ENCODE measurements at regions of chr13 and their contacts with region 1.

Region 1: DNA sequence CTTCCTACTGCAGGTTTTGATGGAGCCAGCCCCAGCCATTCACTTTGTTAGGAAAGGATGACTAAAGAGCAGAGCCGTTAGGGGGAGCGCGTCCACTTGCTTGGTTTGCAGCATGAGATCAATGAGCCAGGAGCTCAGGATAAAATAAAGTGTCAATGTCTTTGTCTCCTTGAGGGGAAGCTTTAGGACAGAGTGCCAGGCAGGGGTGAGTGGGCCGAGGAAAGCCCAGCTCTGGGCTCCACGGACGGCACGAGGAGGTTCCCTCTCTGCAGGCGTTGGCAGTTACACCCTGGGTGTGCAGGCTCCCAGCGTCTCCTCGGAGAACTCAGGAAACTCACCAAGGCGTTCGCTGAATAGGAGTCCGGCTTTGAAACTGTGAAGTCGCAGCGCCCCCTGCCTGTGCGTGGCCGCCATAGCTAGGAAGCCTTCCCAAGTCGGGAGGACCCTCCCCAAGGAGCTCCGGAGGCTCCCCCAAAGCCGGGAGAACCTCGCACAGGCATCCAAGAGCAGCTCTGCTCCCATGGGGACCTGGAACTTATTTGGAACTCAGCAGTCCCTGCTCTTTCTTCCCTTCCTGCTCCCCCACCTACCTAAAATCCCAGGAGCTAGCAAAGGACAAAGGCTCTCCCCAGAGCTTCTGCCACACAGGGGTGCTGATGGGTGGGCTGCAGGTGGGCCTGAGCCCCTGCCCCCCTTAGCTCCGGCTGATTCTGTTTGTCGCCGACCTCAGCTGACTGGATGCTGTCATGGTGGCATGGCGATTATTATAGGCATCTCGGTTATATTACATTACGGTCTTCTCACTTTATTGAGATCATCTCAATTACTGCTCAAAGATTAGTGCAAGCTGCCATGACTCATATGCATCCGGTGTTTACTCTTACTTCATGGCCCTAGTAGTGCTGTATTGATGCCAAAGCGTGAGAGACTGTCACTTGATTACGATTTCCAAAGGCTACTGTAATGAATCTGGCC is 34.4 kb downstream of the GSX1 start:
- DNase-seq: peak; percentile 82
- ATAC-seq: peak; percentile 84
- H3K4me3 Mint-ChIP-seq: no peak overlapping the region
- H3K27ac Mint-ChIP-seq: no peak overlapping the region
- H3K4me1 Mint-ChIP-seq: peaks cover 7% of the 10 kb centered on the region
- H3K27me3 Mint-ChIP-seq: peaks cover 51% of the 10 kb centered on the region

Region 2: GRCh38 chr13:27362064-27362883 is 464.4 kb before region 1 on chr13:
- CTCF ChIA-PET with region 1: interaction called, 45 read pairs
- POLR2A ChIA-PET with region 1: no interaction called
- intact Hi-C with region 1: loop called (anchors 1 kb)
- DNase-seq: peak; percentile 89
- ATAC-seq: peak; percentile 97
- H3K4me3 Mint-ChIP-seq: peak overlapping the region; percentile 26
- H3K27ac Mint-ChIP-seq: no peak overlapping the region
- H3K4me1 Mint-ChIP-seq: peaks cover 2% of the 10 kb centered on the region
- H3K27me3 Mint-ChIP-seq: peaks cover 8% of the 10 kb centered on the region

Region 3: DNA sequence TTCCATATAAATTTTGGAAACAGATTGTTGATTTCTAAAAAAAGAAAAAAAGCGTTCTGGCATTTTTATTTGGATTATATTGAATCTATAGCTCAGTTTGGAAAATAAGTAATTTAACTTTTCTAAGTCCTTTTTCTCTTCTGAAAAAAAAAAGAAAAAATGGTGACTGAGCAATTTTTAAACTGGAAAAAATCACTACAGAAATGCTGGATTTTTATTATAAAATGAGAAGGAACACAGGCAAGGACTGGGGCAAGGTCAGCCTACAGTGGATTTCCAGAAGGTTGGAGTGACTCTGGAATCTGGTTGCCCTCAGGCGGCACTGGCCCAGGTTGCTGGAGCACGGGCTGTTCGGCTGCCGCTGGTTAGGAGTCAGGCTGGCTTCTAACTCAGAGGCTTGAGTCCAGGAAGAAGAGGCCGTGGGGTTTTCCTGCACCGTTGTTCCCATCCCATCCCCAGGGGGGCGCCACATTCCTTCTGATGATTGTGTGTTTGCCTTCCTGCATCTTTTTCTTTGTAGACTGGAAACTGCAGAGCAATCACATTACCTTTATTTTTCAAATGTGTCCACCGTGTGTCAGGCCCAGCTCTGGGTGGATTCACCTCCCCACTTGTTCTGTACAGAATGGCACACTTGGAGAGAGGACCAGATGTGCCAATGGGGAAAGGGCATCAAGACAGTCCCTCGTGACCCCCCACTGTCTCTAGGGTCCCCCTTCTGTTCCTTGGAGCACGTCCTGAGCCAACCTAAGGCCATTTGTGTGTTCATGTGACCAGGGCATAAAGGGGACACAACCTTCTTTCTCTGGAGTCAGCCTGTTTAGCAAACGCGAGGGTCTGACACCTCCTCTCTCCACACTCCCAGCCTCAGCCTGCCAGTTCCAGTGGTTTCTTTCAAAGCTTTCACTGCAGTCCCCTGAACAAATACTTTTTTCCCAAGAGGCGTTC is 446.7 kb before region 1 on chr13:
- CTCF ChIA-PET with region 1: interaction called, 74 read pairs
- POLR2A ChIA-PET with region 1: no interaction called
- intact Hi-C with region 1: loop called (anchors 1 kb)
- DNase-seq: peak; percentile 81
- ATAC-seq: peak; percentile 72
- H3K4me3 Mint-ChIP-seq: no peak overlapping the region
- H3K27ac Mint-ChIP-seq: no peak overlapping the region
- H3K4me1 Mint-ChIP-seq: no peaks in the 10 kb centered on the region
- H3K27me3 Mint-ChIP-seq: peaks cover 6% of the 10 kb centered on the region

Region 4: GRCh38 chr13:27533155-27533643 is 293.5 kb before region 1 on chr13:
- CTCF ChIA-PET with region 1: interaction called, 42 read pairs
- POLR2A ChIA-PET with region 1: no interaction called
- intact Hi-C with region 1: loop called (anchors 1 to 2 kb)
- DNase-seq: peak; percentile 75
- ATAC-seq: peak; percentile 55
- H3K4me3 Mint-ChIP-seq: no peak overlapping the region
- H3K27ac Mint-ChIP-seq: no peak overlapping the region
- H3K4me1 Mint-ChIP-seq: peaks cover 4% of the 10 kb centered on the region
- H3K27me3 Mint-ChIP-seq: peaks cover 6% of the 10 kb centered on the region

Region 5: DNA sequence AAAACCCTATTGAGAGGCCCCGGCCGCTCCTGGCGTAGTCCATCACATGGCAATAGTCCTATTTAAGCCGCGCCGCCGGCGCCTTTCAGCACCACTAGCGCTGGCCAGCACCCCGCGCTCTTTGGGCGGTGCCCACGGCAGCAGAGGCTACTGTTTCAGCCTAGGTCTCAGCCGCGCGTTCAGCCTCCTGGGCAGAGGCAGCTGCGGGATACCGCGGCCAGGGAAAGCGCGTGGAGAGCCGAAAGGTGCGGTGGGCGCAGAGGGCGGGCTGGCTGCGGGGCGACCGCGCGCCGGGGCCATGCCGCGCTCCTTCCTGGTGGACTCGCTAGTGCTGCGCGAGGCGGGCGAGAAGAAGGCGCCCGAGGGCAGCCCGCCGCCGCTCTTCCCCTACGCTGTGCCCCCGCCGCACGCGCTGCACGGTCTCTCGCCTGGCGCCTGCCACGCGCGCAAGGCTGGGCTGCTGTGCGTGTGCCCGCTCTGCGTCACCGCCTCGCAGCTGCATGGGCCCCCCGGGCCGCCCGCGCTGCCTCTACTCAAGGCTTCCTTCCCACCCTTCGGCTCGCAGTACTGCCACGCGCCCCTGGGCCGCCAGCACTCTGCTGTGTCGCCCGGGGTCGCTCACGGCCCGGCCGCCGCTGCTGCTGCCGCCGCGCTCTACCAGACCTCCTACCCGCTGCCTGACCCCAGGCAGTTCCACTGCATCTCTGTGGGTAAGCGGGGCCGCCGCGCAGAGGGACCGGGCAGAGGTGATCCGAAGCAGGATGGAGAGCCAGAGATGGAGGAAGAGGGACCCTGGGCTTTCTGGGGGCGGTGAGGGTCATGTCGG is 34.1 kb before region 1 on chr13 and contains the start of gene GSX1:
- CTCF ChIA-PET with region 1: interaction called, 20 read pairs
- POLR2A ChIA-PET with region 1: no interaction called
- intact Hi-C with region 1: loop called in 1 of 2 experiments (anchors 5 kb)
- DNase-seq: peak; percentile 74
- ATAC-seq: peak; percentile 69
- H3K4me3 Mint-ChIP-seq: peak within 1 kb of the TSS; percentile 69
- H3K27ac Mint-ChIP-seq: no peak within 1 kb of the TSS
- H3K4me1 Mint-ChIP-seq: peaks cover 36% of the 10 kb centered on the region
- H3K27me3 Mint-ChIP-seq: peaks cover 72% of the 10 kb centered on the region
- total RNA-seq, gene GSX1: not detected

Region 6: GRCh38 chr13:27953676-27954405 is 127.2 kb after region 1 on chr13:
- CTCF ChIA-PET with region 1: interaction called, 61 read pairs
- POLR2A ChIA-PET with region 1: no interaction called
- intact Hi-C with region 1: loop called (anchors 1 to 5 kb)
- DNase-seq: peak; percentile 84
- ATAC-seq: peak; percentile 94
- H3K4me3 Mint-ChIP-seq: peak overlapping the region; percentile 62
- H3K27ac Mint-ChIP-seq: peak overlapping the region; percentile 19
- H3K4me1 Mint-ChIP-seq: peaks cover 15% of the 10 kb centered on the region
- H3K27me3 Mint-ChIP-seq: peaks cover 57% of the 10 kb centered on the region